ENCODE measurements at regions of chr12 and their contacts with region 1.

Region 1: DNA sequence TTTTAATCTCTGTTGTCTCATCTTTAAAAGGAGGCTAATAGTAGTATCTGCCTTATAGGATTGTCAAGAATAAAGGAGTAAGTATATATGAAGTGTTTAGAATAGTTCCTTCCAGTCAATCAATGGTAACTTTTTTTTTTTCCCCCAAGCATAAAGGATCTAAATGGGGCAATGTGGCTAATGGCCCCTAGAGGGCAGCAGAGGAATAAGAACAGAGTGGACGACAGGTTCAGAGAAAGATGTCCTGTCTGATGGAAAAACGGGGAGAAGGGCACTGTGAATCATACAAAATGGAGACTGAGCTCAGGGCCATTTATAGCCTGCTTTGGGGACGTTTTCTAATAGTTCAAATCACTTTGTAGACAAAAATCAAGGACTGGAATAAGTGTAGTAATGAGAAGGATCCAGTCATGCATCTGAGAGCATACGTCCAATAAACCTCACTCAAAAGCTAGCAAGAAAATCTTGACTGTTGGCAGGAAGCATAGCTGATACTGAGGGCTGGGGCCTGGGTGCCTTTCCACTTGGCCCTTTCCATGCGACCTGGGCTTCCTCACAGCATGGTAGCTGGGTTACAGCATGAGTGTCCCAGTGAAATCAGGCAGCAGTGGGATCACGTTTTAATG is 51.3 kb downstream of the IFNG-AS1 start:
- DNase-seq: peak; percentile 56
- H3K4me3 Mint-ChIP-seq: peak overlapping the region; percentile 13
- H3K27ac Mint-ChIP-seq: peak overlapping the region; percentile 83
- H3K4me1 Mint-ChIP-seq: peaks cover 65% of the 10 kb centered on the region
- H3K27me3 Mint-ChIP-seq: no peaks in the 10 kb centered on the region

Region 2: DNA sequence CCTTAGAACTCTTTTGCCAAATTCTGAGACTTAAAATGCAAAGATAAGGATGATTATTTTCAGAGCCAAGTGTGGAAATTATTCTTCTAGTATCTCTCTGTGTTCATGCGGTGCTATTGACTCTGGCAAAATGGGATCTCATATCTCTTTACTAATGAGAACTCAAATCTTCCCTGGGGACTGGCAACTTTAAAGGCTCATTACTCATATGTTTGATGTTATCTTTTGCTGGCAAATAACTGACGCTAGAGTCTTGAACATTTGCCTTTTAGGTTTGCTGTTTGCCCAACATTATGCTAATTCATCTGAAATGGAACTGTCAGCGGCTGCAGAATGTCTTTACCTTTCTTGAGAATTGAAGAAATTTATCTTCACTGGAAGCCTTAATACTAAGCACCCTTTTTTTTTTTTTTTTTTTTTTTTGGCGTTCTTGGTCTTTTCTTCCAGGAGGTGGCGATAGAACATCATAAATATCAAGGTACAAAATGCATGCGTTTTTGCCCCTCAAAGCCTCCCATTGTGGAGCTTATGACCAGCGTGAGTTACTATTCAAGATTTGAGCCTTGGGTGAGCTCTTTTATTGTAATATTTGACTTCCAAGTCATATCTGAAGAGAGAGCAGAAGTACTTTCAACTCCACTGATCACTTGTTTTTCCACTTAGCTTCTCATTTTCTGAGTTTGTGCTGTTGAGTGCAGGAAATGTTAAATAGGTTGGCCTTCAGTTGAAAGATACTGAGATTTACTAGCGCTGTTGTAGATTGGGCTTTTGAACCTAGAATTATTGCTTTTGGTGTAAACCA is 684.8 kb before region 1 on chr12:
- intact Hi-C with region 1: loop called (anchors 5 kb)
- DNase-seq: no peak
- H3K4me3 Mint-ChIP-seq: no peak overlapping the region
- H3K27ac Mint-ChIP-seq: no peak overlapping the region
- H3K4me1 Mint-ChIP-seq: peaks cover 23% of the 10 kb centered on the region
- H3K27me3 Mint-ChIP-seq: no peaks in the 10 kb centered on the region

Region 3: GRCh38 chr12:67966560-67966959 is 74.0 kb before region 1 on chr12:
- intact Hi-C with region 1: no loop called
- DNase-seq: no peak
- H3K4me3 Mint-ChIP-seq: no peak overlapping the region
- H3K27ac Mint-ChIP-seq: no peak overlapping the region
- H3K4me1 Mint-ChIP-seq: no peaks in the 10 kb centered on the region
- H3K27me3 Mint-ChIP-seq: no peaks in the 10 kb centered on the region

Region 4: DNA sequence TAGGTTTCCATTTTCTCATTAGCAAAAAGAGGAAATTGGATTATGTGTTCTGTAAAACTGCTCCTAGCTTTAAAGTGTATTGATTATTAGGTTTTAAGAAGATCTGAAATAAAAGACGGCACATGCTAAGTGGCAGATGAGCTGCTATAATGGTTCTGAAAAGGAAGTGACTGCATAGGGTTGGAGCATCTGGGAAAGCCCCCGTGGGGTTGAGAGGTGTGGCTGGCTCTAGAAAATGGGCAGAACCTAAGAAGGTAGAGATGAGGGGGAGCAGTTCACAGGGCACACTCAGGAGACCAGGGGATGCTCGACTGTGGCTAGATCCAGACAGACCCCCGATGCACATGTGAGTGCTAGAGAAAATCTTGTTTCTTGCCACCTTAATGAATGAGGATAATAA is 49.4 kb before region 1 on chr12:
- intact Hi-C with region 1: loop called (anchors 1 kb)
- DNase-seq: peak; percentile 48
- H3K4me3 Mint-ChIP-seq: peak overlapping the region; percentile 78
- H3K27ac Mint-ChIP-seq: peak overlapping the region; percentile 91
- H3K4me1 Mint-ChIP-seq: peaks cover 77% of the 10 kb centered on the region
- H3K27me3 Mint-ChIP-seq: no peaks in the 10 kb centered on the region

Region 5: DNA sequence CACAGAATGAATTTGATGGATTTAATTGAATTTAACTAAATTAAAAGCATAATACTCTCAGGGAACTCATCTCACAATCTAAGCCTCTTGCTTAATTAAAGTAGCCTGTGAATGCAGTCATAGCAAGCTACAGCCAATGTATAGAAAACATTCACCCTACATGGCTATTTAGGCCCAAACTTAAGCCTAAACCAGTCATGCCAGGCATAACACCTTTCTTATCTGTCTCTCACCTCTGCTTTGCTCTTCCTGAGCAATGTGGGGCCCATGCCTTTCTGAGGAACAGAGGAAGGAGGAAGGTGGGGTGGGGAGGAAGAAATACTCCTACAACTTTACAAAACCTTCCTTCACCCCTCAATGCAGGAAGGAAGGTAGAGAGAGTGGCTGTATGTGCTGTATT is 22.2 kb before region 1 on chr12:
- intact Hi-C with region 1: loop called (anchors 2 kb)
- DNase-seq: no peak
- H3K4me3 Mint-ChIP-seq: peak overlapping the region; percentile 11
- H3K27ac Mint-ChIP-seq: peak overlapping the region; percentile 59
- H3K4me1 Mint-ChIP-seq: peaks cover 38% of the 10 kb centered on the region
- H3K27me3 Mint-ChIP-seq: no peaks in the 10 kb centered on the region

Region 6: GRCh38 chr12:68106160-68106559 is 65.6 kb after region 1 on chr12:
- intact Hi-C with region 1: loop called (anchors 2 kb)
- DNase-seq: no peak
- H3K4me3 Mint-ChIP-seq: no peak overlapping the region
- H3K27ac Mint-ChIP-seq: no peak overlapping the region
- H3K4me1 Mint-ChIP-seq: peaks cover 16% of the 10 kb centered on the region
- H3K27me3 Mint-ChIP-seq: no peaks in the 10 kb centered on the region

Region 7: GRCh38 chr12:68180792-68181744 is 140.5 kb after region 1 on chr12:
- intact Hi-C with region 1: loop called (anchors 2 kb)
- DNase-seq: peak; percentile 67
- H3K4me3 Mint-ChIP-seq: peak overlapping the region; percentile 34
- H3K27ac Mint-ChIP-seq: peak overlapping the region; percentile 91
- H3K4me1 Mint-ChIP-seq: peaks cover 85% of the 10 kb centered on the region
- H3K27me3 Mint-ChIP-seq: no peaks in the 10 kb centered on the region

Region 8: GRCh38 chr12:68317047-68317667 is 276.6 kb after region 1 on chr12:
- intact Hi-C with region 1: loop called (anchors 1 kb)
- DNase-seq: no peak
- H3K4me3 Mint-ChIP-seq: no peak overlapping the region
- H3K27ac Mint-ChIP-seq: no peak overlapping the region
- H3K4me1 Mint-ChIP-seq: peaks cover 17% of the 10 kb centered on the region
- H3K27me3 Mint-ChIP-seq: no peaks in the 10 kb centered on the region

Measured in activated T-helper 1 cell treated with anti-CD3 and anti-CD28 coated beads, Interleukin-12 subunit alpha, Interleukin-12 subunit beta, Interleukin-2, Interleukin-4 antibody, amounts not matched to agents 30 ng/mL and 10 ng/mL and 1 ng/mL, durations not matched to agents 14 hours and 24 hours and 36 hours (primary cell).